Activated B cell treated with CpG ODN at 0.5 μM for 24 hours (primary cell): ENCODE measurements at regions of chr12 and their contacts with region 1.

Region 1: GRCh38 chr12:70719672-70720420 is 82.6 kb upstream of the PTPRB start:
- DNase-seq: no peak
- ATAC-seq: no peak
- H3K4me3 Mint-ChIP-seq: peak overlapping the region; percentile 19
- H3K27ac Mint-ChIP-seq: no peak overlapping the region
- H3K4me1 Mint-ChIP-seq: peaks cover 2% of the 10 kb centered on the region
- H3K27me3 Mint-ChIP-seq: peaks cover 8% of the 10 kb centered on the region
- CTCF ChIP-seq: no peak

Region 2: GRCh38 chr12:69879041-69879960 is 840.5 kb before region 1 on chr12:
- CTCF ChIA-PET with region 1: interaction called, 4 read pairs
- POLR2A ChIA-PET with region 1: no interaction called
- intact Hi-C with region 1: loop called (anchors 1 kb)
- DNase-seq: peak; percentile 29
- ATAC-seq: peak; percentile 82
- H3K4me3 Mint-ChIP-seq: no peak overlapping the region
- H3K27ac Mint-ChIP-seq: no peak overlapping the region
- H3K4me1 Mint-ChIP-seq: peaks cover 5% of the 10 kb centered on the region
- H3K27me3 Mint-ChIP-seq: peaks cover 15% of the 10 kb centered on the region
- CTCF ChIP-seq: peak; percentile 95

Region 3: DNA sequence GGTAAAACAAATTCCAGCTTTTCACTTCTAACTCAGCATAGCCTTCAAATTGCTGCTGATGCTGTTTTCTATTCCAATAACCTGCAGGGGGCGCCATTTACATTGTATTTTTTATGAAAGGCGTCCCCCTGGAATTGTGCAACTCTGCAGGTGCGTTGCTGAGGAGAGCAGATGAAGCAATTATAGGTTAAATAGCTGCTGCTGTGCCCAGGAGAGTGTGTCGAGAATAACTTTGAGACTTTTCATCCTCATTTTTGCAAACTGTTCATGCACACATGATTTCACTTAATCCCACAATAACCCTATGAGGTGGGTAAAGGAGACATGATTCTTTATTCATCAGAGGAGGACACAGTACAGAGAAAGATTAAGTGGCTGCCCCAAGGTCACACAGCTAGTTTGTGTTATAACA is 819.1 kb before region 1 on chr12:
- CTCF ChIA-PET with region 1: interaction called, 4 read pairs
- POLR2A ChIA-PET with region 1: no interaction called
- intact Hi-C with region 1: loop called (anchors 1 kb)
- DNase-seq: no peak
- ATAC-seq: peak; percentile 40
- H3K4me3 Mint-ChIP-seq: no peak overlapping the region
- H3K27ac Mint-ChIP-seq: no peak overlapping the region
- H3K4me1 Mint-ChIP-seq: no peaks in the 10 kb centered on the region
- H3K27me3 Mint-ChIP-seq: no peaks in the 10 kb centered on the region
- CTCF ChIP-seq: peak; percentile 68

Region 4: GRCh38 chr12:70590051-70590450 is 129.8 kb before region 1 on chr12:
- CTCF ChIA-PET with region 1: no interaction called
- POLR2A ChIA-PET with region 1: no interaction called
- intact Hi-C with region 1: loop called (anchors 1 kb)
- DNase-seq: no peak
- ATAC-seq: no peak
- H3K4me3 Mint-ChIP-seq: no peak overlapping the region
- H3K27ac Mint-ChIP-seq: no peak overlapping the region
- H3K4me1 Mint-ChIP-seq: no peaks in the 10 kb centered on the region
- H3K27me3 Mint-ChIP-seq: peaks cover 2% of the 10 kb centered on the region
- CTCF ChIP-seq: peak; percentile 24